CD4-positive, alpha-beta T cell (primary cell): ENCODE measurements at regions of chr14 and their contacts with region 1.

Region 1: DNA sequence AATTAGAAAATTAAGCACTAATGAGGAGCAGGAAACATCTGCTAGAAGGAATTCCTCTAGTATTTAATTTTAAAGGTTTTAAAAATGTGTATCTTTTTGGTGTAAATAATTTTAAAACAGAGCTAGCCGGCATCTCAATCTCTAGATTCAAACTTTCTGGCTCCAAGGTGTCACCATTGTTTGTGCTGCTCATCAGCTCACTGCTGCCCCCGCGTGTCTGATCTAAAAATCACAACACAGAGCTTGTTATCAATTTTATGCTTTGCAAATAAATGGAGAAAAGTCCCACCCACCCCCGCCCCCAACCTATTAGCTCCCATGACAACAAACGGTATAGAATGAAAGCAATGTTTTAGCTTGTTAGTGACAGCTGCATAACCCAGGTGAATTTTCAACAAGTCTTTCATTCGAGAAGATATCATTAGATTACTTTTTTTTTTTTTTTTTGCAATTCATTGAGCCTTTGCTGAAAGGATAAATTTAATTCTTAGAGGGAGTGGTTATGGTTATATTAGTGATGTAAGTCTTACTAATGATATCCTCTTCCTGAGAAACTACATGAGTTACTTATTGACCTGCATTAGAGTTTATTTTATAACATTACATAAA is 11.3 kb upstream of the ABHD12B start:
- DNase-seq: peak; percentile 83 to 95 (median 90)
- ATAC-seq: peak; percentile 79
- H3K4me3 ChIP-seq: peak overlapping the region; percentile 83
- H3K4me3 Mint-ChIP-seq: peak overlapping the region; percentile 93
- H3K27ac ChIP-seq: no peak overlapping the region
- H3K27ac Mint-ChIP-seq: peak overlapping the region; percentile 89
- H3K4me1 ChIP-seq: peaks cover 11% of the 10 kb centered on the region
- H3K4me1 Mint-ChIP-seq: peaks cover 16% of the 10 kb centered on the region
- H3K27me3 ChIP-seq: no peaks in the 10 kb centered on the region
- H3K27me3 Mint-ChIP-seq: peaks cover 4% of the 10 kb centered on the region
- CTCF ChIP-seq: peak; percentile 87

Region 2: DNA sequence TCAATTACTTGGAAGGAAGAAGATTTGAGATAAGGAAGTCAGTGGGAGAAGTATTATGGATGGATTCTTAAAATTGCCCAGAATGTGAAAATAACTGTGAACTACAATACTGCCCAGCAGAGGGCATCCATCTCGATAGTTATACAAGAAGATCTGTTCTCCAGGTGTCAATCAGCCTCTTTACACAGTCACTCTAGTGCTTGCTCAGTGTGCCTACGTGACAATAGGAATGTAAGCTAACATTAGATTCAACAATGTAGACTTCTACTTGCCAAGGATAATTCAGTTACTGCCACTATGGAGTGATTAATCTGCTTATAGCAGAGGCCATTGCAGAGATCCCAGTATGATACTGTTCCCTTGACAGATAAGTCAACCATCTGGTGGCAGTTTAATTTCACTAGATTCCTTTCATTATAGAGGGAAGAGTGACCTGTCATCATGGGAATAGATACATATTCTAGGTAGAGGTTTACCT is 317.6 kb before region 1 on chr14:
- CTCF ChIA-PET with region 1: interaction called, 5 read pairs
- POLR2A ChIA-PET with region 1: no interaction called
- intact Hi-C with region 1: loop called (anchors 2 kb)
- DNase-seq: peak in 7 of 14 experiments; percentile 13 to 71 (median 53)
- ATAC-seq: peak; percentile 80
- H3K4me3 ChIP-seq: no peak overlapping the region
- H3K4me3 Mint-ChIP-seq: no peak overlapping the region
- H3K27ac ChIP-seq: no peak overlapping the region
- H3K27ac Mint-ChIP-seq: no peak overlapping the region
- H3K4me1 ChIP-seq: no peaks in the 10 kb centered on the region
- H3K4me1 Mint-ChIP-seq: peaks cover 14% of the 10 kb centered on the region
- H3K27me3 ChIP-seq: no peaks in the 10 kb centered on the region
- H3K27me3 Mint-ChIP-seq: no peaks in the 10 kb centered on the region
- CTCF ChIP-seq: peak; percentile 72

Region 3: GRCh38 chr14:50590464-50590863 is 270.1 kb before region 1 on chr14:
- CTCF ChIA-PET with region 1: no interaction called
- POLR2A ChIA-PET with region 1: no interaction called
- intact Hi-C with region 1: no loop called
- DNase-seq: no peak
- ATAC-seq: no peak
- H3K4me3 ChIP-seq: no peak overlapping the region
- H3K4me3 Mint-ChIP-seq: no peak overlapping the region
- H3K27ac ChIP-seq: no peak overlapping the region
- H3K27ac Mint-ChIP-seq: no peak overlapping the region
- H3K4me1 ChIP-seq: no peaks in the 10 kb centered on the region
- H3K4me1 Mint-ChIP-seq: no peaks in the 10 kb centered on the region
- H3K27me3 ChIP-seq: no peaks in the 10 kb centered on the region
- H3K27me3 Mint-ChIP-seq: no peaks in the 10 kb centered on the region
- CTCF ChIP-seq: no peak

Region 4: DNA sequence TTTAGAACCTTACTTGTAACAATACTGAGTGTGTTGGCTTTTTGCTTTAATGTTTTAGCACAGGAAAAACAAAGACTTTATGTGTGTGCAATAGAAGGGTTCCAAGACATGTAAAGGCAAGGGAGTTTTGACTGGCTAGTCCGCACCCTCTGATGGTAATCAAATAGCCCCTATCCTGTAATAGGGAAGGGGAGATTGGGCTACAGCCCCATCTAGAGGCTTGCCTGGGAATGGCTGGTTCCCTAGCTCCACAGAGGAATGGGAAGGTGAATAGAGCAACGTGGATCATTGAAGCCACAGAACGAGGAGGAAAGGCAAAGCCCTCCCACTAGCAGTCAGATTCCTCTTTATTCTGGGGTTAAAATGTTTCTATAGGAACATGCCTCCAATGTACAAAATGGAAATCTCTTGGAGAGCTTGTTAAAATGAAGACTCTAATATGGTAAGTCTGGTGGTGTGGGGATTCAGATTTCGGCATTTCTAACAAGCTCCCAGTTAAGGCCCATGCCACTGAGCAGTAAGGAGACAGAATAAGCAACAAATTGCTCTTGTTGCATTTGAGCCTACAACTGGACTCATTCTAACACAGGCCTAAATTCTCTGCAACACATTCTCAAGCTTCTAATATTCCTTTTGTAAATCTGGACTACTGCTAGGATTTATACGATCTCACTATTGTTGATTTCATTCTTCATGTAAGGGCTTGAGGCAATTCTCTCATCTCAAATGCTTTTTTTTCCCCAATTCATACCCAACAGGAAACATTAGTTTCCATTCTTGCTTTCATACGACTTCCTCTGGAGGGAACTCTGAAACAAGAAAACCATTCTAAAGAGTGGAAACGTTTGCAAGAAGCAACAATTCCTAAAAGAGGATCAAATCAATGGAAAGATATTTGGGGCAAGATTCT is 86.7 kb before region 1 on chr14:
- CTCF ChIA-PET with region 1: interaction called, 43 read pairs
- POLR2A ChIA-PET with region 1: interaction called, 35 read pairs
- intact Hi-C with region 1: loop called (anchors 1 to 2 kb)
- DNase-seq: peak in 5 of 14 experiments; percentile 10 to 47 (median 35)
- ATAC-seq: peak; percentile 72
- H3K4me3 ChIP-seq: no peak overlapping the region
- H3K4me3 Mint-ChIP-seq: no peak overlapping the region
- H3K27ac ChIP-seq: no peak overlapping the region
- H3K27ac Mint-ChIP-seq: peak overlapping the region; percentile 0
- H3K4me1 ChIP-seq: peaks cover 11% of the 10 kb centered on the region
- H3K4me1 Mint-ChIP-seq: peaks cover 37% of the 10 kb centered on the region
- H3K27me3 ChIP-seq: no peaks in the 10 kb centered on the region
- H3K27me3 Mint-ChIP-seq: no peaks in the 10 kb centered on the region
- CTCF ChIP-seq: peak; percentile 63

Region 5: GRCh38 chr14:50785457-50786063 is 75.0 kb before region 1 on chr14:
- CTCF ChIA-PET with region 1: interaction called, 9 read pairs
- POLR2A ChIA-PET with region 1: interaction called, 47 read pairs
- intact Hi-C with region 1: no loop called
- DNase-seq: peak in 4 of 14 experiments; percentile 22 to 39 (median 30)
- ATAC-seq: peak; percentile 67
- H3K4me3 ChIP-seq: no peak overlapping the region
- H3K4me3 Mint-ChIP-seq: peak overlapping the region; percentile 49
- H3K27ac ChIP-seq: peak overlapping the region; percentile 65 to 74
- H3K27ac Mint-ChIP-seq: peak overlapping the region; percentile 94
- H3K4me1 ChIP-seq: peaks cover 46% of the 10 kb centered on the region
- H3K4me1 Mint-ChIP-seq: peaks cover 87% of the 10 kb centered on the region
- H3K27me3 ChIP-seq: no peaks in the 10 kb centered on the region
- H3K27me3 Mint-ChIP-seq: no peaks in the 10 kb centered on the region
- CTCF ChIP-seq: no peak

Region 6: DNA sequence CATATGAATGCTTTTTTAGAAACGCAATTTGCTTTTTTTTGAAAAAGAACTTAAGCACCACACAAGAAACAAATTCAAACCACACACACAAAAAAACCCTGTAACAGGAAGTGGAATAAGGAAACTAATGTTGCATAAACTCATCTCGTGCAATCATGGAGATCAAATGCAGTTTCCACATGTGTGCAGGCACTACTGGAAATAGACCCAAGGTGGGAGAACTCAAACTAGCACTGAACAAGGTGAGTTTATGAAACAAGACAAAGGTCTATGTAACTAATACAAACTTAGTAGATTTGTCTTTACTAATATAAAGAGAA is 47.1 kb before region 1 on chr14:
- CTCF ChIA-PET with region 1: interaction called, 4 read pairs
- POLR2A ChIA-PET with region 1: interaction called, 8 read pairs
- intact Hi-C with region 1: loop called (anchors 2 kb)
- DNase-seq: peak in 4 of 14 experiments; percentile 15 to 78 (median 72)
- ATAC-seq: peak; percentile 89
- H3K4me3 ChIP-seq: peak overlapping the region; percentile 28
- H3K4me3 Mint-ChIP-seq: peak overlapping the region; percentile 82
- H3K27ac ChIP-seq: peak overlapping the region; percentile 56 to 57
- H3K27ac Mint-ChIP-seq: peak overlapping the region; percentile 81
- H3K4me1 ChIP-seq: peaks cover 42% of the 10 kb centered on the region
- H3K4me1 Mint-ChIP-seq: peaks cover 65% of the 10 kb centered on the region
- H3K27me3 ChIP-seq: no peaks in the 10 kb centered on the region
- H3K27me3 Mint-ChIP-seq: no peaks in the 10 kb centered on the region
- CTCF ChIP-seq: no peak

Region 7: DNA sequence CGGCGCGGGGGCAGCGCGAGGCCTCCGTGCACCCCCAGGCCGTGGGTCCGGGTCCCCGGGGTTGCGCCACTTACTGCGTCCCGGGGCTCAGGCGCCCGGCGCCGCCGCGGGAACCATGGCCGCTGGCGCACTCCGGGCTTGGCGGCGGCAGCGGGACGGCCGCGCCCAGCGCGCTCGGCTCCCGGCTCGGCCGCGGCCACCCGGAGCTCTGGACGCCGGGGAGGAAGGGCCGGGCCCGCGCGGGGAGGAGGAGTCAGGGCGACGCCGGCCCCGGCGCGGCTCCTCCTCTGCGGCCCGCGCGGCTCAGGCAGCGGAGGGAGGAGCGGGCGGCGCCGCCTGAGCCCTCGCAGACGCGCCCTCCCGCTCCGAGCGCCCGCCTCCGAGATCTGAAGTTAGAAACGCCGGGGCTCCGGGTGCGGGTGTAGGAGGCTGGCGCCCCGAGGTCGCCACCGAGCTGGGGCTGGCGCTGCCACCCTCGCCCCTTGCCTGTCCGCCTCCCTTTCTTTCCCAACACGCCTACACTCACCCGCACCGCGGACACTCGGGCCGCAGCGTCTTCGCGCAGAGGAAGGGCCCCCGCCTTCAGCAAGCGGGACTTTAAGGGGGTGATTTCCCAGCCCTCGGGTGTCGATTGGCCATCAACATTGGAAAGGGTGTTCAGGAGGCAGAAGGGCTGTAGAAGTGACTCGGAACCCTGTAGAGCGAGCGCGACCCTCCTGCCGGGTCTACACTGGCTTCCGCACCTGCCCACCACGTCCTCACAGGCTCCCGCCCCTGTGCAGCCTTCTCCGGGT is 29.5 kb before region 1 on chr14 and contains the start of gene NIN:
- CTCF ChIA-PET with region 1: interaction called, 19 read pairs
- POLR2A ChIA-PET with region 1: interaction called, 83 read pairs
- intact Hi-C with region 1: loop called (anchors 2 kb)
- DNase-seq: peak; percentile 47 to 89 (median 68)
- ATAC-seq: peak; percentile 83
- H3K4me3 ChIP-seq: peak within 1 kb of the TSS; percentile 90
- H3K4me3 Mint-ChIP-seq: peak within 1 kb of the TSS; percentile 99
- H3K27ac ChIP-seq: peak within 1 kb of the TSS; percentile 65 to 88
- H3K27ac Mint-ChIP-seq: peak within 1 kb of the TSS; percentile 92
- H3K4me1 ChIP-seq: peaks cover 37% of the 10 kb centered on the region
- H3K4me1 Mint-ChIP-seq: peaks cover 74% of the 10 kb centered on the region
- H3K27me3 ChIP-seq: no peaks in the 10 kb centered on the region
- H3K27me3 Mint-ChIP-seq: no peaks in the 10 kb centered on the region
- CTCF ChIP-seq: no peak
- total RNA-seq, gene NIN: 96.8 to 98.5 TPM